Activated CD4-positive, alpha-beta T cell treated with anti-CD3 and anti-CD28 coated beads for 36 hours (primary cell): ENCODE measurements at regions of chr12 and their contacts with region 1.

Region 1: GRCh38 chr12:56593909-56594621 is 36.1 kb downstream of the BAZ2A start:
- DNase-seq: peak; percentile 75
- ATAC-seq: peak; percentile 67
- H3K4me3 Mint-ChIP-seq: no peak overlapping the region
- H3K27ac Mint-ChIP-seq: no peak overlapping the region
- H3K4me1 Mint-ChIP-seq: no peaks in the 10 kb centered on the region
- H3K27me3 Mint-ChIP-seq: no peaks in the 10 kb centered on the region

Region 2: GRCh38 chr12:56581418-56582145 is 12.5 kb before region 1 on chr12:
- CTCF ChIA-PET with region 1: interaction called, 30 read pairs
- POLR2A ChIA-PET with region 1: interaction called, 3 read pairs
- intact Hi-C with region 1: no loop called
- DNase-seq: peak; percentile 27
- ATAC-seq: peak; percentile 92
- H3K4me3 Mint-ChIP-seq: no peak overlapping the region
- H3K27ac Mint-ChIP-seq: peak overlapping the region; percentile 56
- H3K4me1 Mint-ChIP-seq: peaks cover 18% of the 10 kb centered on the region
- H3K27me3 Mint-ChIP-seq: no peaks in the 10 kb centered on the region

Region 3: DNA sequence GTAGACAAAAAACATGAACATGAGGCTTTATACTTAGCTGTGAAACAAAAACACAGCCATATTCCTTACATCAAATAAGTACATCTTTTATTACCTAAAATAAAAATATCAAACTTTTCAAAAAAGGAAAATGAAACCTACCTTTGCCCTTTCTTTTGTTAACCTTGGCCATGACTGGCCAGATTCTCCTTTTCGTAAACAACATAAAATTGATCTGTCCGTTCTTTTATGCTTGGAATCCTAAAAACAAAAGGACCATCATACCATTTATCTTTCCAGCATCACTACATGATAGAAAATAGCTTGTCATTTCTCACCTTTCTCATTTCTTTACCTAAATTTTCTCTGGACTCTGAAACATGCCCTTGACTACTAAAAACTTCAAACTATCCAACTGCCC is 77.5 kb after region 1 on chr12:
- CTCF ChIA-PET with region 1: no interaction called
- POLR2A ChIA-PET with region 1: no interaction called
- intact Hi-C with region 1: no loop called
- DNase-seq: no peak
- ATAC-seq: no peak
- H3K4me3 Mint-ChIP-seq: no peak overlapping the region
- H3K27ac Mint-ChIP-seq: no peak overlapping the region
- H3K4me1 Mint-ChIP-seq: peaks cover 58% of the 10 kb centered on the region
- H3K27me3 Mint-ChIP-seq: no peaks in the 10 kb centered on the region